ENCODE measurements at regions of chr16 and their contacts with region 1.

Region 1: DNA sequence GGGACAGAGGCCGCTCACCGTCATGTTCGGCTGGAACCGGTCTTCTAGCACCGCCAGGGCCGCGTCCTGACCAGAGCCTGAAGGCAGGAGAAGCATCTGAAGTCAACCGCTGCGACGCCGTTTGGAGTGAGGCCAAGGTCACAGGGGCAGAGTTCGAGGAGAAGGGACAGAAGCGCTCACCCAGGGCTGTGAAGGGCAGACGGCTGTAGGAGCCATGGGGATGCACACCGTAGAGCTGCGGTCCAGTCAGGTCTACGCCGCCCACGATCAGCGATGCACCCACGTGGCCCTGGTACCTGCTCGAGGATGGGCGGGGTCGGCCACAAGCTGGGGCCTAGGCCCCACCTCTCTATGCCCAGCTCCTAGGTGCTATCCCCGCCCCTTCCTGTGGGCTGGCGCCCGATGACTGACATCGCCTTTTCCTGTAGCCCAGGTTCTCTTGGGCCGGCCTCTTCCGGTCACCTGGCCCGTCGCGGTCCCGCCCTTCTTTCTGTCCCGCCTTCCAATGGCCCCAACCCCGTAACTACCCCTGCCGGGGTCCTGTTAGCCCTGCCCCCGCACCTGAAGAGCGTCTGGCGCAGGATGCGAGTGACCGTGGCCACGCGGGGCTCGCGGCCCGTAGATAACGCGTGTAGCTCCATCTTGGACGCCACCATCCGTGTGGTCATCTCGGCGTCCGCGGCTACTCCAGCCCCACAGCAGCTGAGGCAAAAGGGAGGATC is 1.1 kb downstream of the PSMB10 start:
- DNase-seq: peak; percentile 95 to 100
- ATAC-seq: peak; percentile 85 to 95
- H3K4me3 ChIP-seq: peak overlapping the region; percentile 76
- H3K27ac ChIP-seq: peak overlapping the region; percentile 88 to 96
- H3K4me1 ChIP-seq: peaks cover 16% of the 10 kb centered on the region; the same call in 2 of the 3 replicates
- CTCF ChIP-seq: no peak
- EP300 ChIP-seq: no peak
- POLR2A ChIP-seq: peak; percentile 80
- RAD21 ChIP-seq: no peak

Region 2: DNA sequence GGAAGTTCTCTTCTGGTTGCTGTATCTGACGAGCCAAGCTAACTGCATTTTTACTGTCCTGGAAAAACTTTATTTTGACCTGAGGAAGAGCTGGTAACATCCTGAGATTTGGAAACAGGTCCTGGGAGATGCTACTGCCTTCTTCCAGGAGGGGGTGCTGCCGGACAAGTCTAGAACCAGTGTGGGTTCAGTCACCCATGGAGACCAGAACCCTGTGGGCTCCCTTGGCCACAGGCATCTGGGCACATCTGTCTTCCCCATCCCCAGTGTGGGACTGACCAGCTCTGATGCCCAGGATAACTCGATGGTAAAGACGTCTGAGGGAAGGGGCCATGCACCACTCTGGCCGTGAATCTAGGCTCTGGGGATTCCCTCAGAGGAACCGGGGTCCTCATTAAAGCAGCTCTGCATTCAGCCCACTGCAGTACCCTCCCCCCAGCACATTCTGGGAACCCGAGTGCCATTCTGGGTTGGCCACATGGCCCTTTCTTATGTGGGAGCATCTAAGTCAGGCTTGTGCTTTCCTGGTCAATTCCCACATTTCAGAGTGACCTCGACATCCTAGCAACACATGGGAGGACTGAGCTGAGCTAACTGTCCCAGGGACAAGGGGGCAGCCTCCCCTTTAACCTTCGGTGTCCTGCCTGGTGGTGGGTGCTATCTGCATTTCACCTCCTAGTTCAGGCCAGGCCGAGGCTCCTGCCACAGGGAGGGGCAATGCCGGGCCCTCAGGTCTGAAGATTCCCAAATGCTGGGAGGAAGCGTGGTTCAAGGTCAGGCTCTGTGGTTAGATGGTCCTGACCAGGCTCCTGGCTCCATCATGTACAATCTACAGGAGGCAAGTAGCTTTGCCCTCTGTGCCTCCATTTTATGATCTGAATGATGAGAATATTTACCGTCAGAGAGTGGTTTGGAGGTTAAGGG is 262.6 kb before region 1 on chr16:
- CTCF ChIA-PET with region 1: interaction called, 16 read pairs
- POLR2A ChIA-PET with region 1: no interaction called
- DNase-seq: peak; percentile 58 to 84
- ATAC-seq: peak; percentile 57 to 65
- H3K4me3 ChIP-seq: no peak overlapping the region
- H3K27ac ChIP-seq: no peak overlapping the region
- H3K4me1 ChIP-seq: peaks cover 3% of the 10 kb centered on the region; the same call in 1 of the 3 replicates
- CTCF ChIP-seq: peak; percentile 64
- EP300 ChIP-seq: no peak
- POLR2A ChIP-seq: no peak
- RAD21 ChIP-seq: peak; percentile 73 to 83

Region 3: DNA sequence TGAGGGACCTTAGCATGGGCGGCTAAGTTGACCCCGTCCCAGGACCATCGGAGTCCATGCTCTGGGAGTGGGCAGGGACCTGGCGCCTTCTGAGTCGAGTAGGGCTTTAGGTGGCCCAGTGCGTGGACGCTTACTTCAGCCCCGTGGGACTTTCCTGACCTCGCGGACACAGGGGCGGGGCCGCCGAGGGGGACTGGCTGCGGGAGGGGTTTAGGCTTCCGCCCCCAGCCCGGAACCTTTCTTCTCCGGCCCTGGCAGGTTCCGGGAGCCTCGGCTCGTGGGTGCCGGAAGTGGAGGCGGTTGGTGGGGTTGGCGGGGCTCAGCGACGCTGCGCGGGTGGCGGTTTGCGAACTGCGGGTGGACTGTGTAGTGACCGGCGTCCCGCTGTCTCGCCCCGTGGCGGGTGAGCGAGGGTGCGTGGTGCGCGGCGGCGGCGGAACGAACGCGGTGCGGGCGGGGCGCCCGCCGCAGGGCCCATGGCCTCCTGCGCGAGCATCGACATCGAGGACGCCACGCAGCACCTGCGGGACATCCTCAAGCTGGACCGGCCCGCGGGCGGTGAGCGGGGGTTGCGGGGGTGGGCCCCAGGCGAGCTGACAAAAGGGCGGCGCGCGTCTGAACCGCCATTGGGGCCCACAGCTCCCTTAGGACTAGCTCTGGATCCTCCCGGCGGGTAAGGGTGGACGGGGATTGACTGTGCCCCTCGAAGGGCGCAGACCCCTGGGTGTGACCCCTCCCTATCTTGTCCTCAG is 62.6 kb before region 1 on chr16 and contains the start of gene EDC4:
- CTCF ChIA-PET with region 1: interaction called, 370 read pairs
- POLR2A ChIA-PET with region 1: no interaction called
- DNase-seq: peak; percentile 83 to 89
- ATAC-seq: peak; percentile 87 to 92
- H3K4me3 ChIP-seq: peak within 1 kb of the TSS; percentile 99
- H3K27ac ChIP-seq: peak within 1 kb of the TSS; percentile 95 to 97
- H3K4me1 ChIP-seq: peaks cover 24% of the 10 kb centered on the region; the same call in 2 of the 3 replicates
- CTCF ChIP-seq: no peak
- EP300 ChIP-seq: peak in 1 of 2 experiments; percentile 7; a peak in 1 of 5 replicates
- POLR2A ChIP-seq: peak; percentile 83
- RAD21 ChIP-seq: no peak
- polyA plus RNA-seq, gene EDC4: 21.0 and 35.3 TPM in 2 replicates

Measured in A549 (cell line).